Pancreas (tissue), 10 donors: ENCODE measurements at regions of chr13 and their contacts with region 1.

Region 1: DNA sequence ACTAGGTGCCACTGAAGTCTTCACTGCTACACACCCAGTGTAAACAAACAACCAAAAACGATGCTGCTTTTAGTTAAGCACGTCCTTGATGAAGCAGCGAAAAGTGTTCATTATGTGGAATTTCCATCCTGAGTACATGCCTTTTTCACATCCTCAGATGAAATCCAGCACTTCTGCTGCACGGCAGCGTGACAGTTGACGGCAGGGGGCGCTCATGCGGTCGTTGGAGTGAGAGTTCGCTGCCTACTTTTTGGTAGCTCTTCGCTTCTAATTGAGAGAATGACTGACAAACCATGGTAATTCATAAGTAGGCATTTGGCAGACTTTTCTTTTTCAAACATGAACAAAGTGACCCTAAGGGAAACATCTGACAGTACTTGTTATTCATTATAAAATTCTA is 1124.9 kb downstream of the EFNB2 start:
- DNase-seq: peak; percentile 45 to 94 (median 69)
- ATAC-seq: peak in 3 of 4 donors; percentile 76 to 81 (median 76)
- H3K4me3 ChIP-seq: no peak overlapping the region
- H3K27ac ChIP-seq: no peak overlapping the region
- H3K4me1 ChIP-seq: no peaks in the 10 kb centered on the region
- H3K27me3 ChIP-seq: no peaks in the 10 kb centered on the region
- CTCF ChIP-seq: peak; percentile 37 to 69 (median 66)

Region 2: DNA sequence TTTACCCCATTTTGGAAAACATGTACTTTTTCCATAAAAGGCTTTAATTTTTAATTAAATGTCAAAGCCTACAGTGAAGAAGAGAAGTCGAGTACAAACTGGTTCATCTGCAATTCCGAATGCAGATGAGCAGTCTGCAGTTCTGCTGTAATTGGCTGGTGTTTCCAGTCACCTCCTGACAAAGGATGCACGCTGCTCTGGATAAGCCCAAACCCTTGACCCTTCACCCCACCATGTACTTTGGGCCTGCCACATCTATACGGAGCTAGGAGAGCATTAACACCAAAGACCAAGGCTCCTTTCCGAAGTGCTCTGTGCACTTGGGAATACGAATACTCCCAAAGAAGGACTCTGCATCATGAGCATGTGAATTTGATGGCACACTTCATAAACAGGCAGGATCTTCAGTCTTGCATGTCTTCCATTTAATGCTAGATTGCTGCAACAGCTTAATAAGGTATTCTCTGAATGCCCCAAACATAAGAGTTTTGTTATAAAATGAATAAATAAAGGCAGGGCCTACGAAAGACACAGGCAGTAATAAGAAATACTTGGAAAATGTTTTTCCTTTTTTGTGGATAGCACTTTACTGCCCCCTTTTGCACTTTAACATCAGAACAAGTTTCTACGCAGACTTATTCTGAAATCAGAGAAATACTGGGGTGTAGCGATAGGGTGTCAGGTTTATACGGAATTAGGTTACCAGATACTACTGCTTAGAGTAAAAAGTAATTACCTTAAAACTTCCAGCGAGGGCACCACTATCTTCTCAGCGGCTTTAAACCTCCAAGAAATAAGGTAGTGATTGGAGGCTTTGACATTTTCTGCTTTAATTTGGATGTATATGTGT is 1109.8 kb after region 1 on chr13:
- intact Hi-C with region 1: loop called in 1 of 3 experiments (anchors 10 kb)
- DNase-seq: no peak
- ATAC-seq: peak in 2 of 4 donors; percentile 51 to 52
- H3K4me3 ChIP-seq: no peak overlapping the region
- H3K27ac ChIP-seq: no peak overlapping the region
- H3K4me1 ChIP-seq: no peaks in the 10 kb centered on the region
- H3K27me3 ChIP-seq: no peaks in the 10 kb centered on the region
- CTCF ChIP-seq: no peak